Caco-2 (cell line): ENCODE measurements at regions of chr6 and their contacts with region 1.

Region 1: GRCh38 chr6:145633981-145634627 is 101.2 kb downstream of the EPM2A start:
- DNase-seq: peak; percentile 80 to 87
- H3K4me3 ChIP-seq: no peak overlapping the region
- H3K4me3 Mint-ChIP-seq: no peak overlapping the region
- H3K27ac Mint-ChIP-seq: no peak overlapping the region
- H3K4me1 ChIP-seq: no peaks in the 10 kb centered on the region
- H3K4me1 Mint-ChIP-seq: peaks cover 15% of the 10 kb centered on the region
- H3K27me3 ChIP-seq: no peaks in the 10 kb centered on the region
- H3K27me3 Mint-ChIP-seq: no peaks in the 10 kb centered on the region
- CTCF ChIP-seq: peak; percentile 85 to 90

Region 2: DNA sequence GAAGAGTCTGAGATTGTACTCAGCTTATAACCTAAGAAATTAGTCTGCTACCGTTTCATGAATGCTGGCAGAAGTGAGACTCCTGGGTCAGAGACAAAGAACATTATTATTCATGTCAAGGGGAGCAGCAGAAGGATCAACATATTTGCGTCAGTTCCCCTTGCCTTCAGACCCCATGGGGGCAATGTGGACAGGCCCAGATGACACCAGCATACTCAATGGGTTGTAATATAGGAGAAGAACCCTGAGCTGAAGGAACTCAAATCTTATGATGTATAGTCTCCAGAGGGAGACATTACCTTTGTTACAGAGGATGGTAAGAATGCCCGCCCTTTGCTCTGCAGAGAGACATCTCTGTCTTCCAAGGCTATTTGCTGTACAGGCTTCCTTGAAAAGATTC is 283.2 kb before region 1 on chr6:
- CTCF ChIA-PET with region 1: interaction called, 6 read pairs
- POLR2A ChIA-PET with region 1: no interaction called
- intact Hi-C with region 1: loop called (anchors 1 kb)
- DNase-seq: no peak
- H3K4me3 ChIP-seq: no peak overlapping the region
- H3K4me3 Mint-ChIP-seq: no peak overlapping the region
- H3K27ac Mint-ChIP-seq: no peak overlapping the region
- H3K4me1 ChIP-seq: no peaks in the 10 kb centered on the region
- H3K4me1 Mint-ChIP-seq: peaks cover 13% of the 10 kb centered on the region
- H3K27me3 ChIP-seq: no peaks in the 10 kb centered on the region
- H3K27me3 Mint-ChIP-seq: no peaks in the 10 kb centered on the region
- CTCF ChIP-seq: no peak

Region 3: GRCh38 chr6:145483191-145483996 is 150.7 kb before region 1 on chr6:
- CTCF ChIA-PET with region 1: interaction called, 4 read pairs
- POLR2A ChIA-PET with region 1: no interaction called
- intact Hi-C with region 1: loop called (anchors 1 kb)
- DNase-seq: peak in 1 of 2 experiments; percentile 29
- H3K4me3 ChIP-seq: no peak overlapping the region
- H3K4me3 Mint-ChIP-seq: no peak overlapping the region
- H3K27ac Mint-ChIP-seq: peak overlapping the region; percentile 45
- H3K4me1 ChIP-seq: peaks cover 14% of the 10 kb centered on the region
- H3K4me1 Mint-ChIP-seq: peaks cover 7% of the 10 kb centered on the region
- H3K27me3 ChIP-seq: no peaks in the 10 kb centered on the region
- H3K27me3 Mint-ChIP-seq: no peaks in the 10 kb centered on the region
- CTCF ChIP-seq: no peak